ENCODE measurements at regions of chr19 and their contacts with region 1.

Region 1: GRCh38 chr19:46717034-46717723 is at the start of gene PRKD2:
- DNase-seq: peak; percentile 86
- H3K4me3 Mint-ChIP-seq: peak within 1 kb of the TSS; percentile 93
- H3K27ac Mint-ChIP-seq: peak within 1 kb of the TSS; percentile 94
- H3K4me1 Mint-ChIP-seq: peaks cover 42% of the 10 kb centered on the region
- H3K27me3 Mint-ChIP-seq: no peaks in the 10 kb centered on the region
- total RNA-seq, gene PRKD2: 88.6 and 92.9 TPM in 2 replicates

Region 2: DNA sequence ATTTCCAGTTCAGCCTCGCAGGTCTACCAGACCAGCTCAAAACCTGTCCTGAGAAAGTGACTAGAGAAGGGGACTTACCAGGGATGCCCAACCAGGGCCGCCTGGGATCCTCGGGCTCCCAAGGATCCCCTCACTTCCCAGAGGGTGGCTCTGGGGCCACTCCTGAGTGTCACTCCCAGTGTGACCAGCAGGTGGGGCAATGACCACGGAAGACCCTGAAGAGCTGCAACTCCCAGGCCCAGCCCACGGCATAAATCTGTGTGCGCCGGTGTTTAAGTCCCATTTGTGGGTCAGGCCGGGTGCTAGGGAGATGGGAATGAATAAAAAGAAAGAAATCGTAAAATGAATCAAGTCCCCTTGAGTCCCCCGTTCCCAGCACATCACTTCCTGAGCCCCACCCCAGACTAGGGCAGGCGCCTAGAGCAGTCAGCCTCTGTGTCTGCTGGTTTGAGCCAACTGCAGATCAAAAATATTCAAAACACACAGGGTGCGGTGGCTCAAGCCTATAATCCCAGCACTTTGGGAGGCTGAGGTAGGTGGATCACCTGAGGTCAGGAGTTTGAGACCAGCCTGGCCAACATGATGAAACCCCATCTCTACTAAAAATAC is 103.0 kb before region 1 on chr19:
- intact Hi-C with region 1: loop called (anchors 2 kb)
- DNase-seq: peak; percentile 63
- H3K4me3 Mint-ChIP-seq: peak overlapping the region; percentile 64
- H3K27ac Mint-ChIP-seq: peak overlapping the region; percentile 92
- H3K4me1 Mint-ChIP-seq: peaks cover 74% of the 10 kb centered on the region
- H3K27me3 Mint-ChIP-seq: no peaks in the 10 kb centered on the region

Region 3: DNA sequence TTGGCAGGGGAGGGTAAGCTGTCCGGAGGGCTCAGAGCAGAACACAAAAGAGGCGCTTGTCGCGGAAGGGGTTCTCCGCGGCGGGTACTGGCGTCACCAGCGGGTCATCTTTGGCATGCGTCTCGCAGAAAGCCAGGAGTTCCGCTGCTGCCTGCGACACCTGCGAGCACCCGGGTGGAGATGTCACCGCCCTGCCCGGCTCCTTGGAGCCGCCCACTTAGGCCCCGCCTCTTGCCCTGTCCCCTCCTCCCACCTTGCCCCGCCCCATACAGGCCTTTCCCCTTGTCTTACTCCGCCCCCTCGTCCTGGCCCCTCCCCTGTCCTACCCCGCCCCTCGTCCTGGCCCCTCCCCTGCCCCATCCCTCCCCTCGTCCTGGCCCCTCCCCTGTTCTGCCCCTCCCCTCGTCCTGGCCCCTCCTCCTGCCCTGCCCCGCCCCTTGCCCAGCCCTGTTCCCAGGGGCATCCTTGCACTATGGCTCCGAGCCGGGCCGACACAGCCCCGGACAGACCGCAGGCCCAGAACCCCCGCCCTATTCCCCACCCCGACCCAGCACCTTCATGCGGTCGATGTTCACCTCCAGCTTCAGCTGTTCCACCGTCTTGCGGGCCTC is 83.0 kb before region 1 on chr19:
- intact Hi-C with region 1: loop called (anchors 1 kb)
- DNase-seq: peak; percentile 94
- H3K4me3 Mint-ChIP-seq: peak overlapping the region; percentile 85
- H3K27ac Mint-ChIP-seq: peak overlapping the region; percentile 75
- H3K4me1 Mint-ChIP-seq: peaks cover 11% of the 10 kb centered on the region
- H3K27me3 Mint-ChIP-seq: peaks cover 2% of the 10 kb centered on the region

Region 4: DNA sequence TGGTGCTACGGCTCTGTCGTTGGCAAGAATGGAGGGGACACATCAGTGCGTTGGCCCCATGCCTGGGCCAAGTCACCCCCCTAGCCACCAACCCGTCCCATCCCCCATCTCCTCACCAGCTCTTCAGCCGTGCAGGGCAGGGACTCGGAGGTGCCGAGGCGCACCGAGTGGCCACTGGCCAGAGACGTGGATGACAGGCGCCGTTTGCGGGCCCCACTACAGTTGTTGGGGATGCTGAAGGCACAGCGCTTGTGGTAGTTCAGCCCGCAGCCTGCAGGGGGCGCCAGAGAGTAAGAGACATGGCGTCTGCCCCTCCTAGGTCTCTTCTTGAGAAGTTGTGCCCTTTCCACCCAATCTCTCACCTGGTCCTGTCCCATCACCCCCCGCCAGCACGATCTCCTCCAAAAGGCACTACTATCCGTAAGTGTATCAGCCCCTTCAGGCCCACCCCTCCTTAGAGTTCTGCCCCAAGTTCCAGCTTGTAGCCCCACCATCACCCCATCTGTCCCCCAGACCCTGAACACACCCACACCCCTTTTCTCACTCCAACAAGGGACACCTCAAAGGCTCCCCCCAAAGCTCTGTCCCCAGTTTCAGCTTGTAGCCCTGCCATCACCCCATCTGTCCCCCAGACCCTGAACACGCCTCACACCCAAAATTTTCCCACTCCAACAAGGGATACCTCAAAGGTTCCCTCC is 12.7 kb before region 1 on chr19:
- intact Hi-C with region 1: loop called (anchors 1 kb)
- DNase-seq: peak; percentile 71
- H3K4me3 Mint-ChIP-seq: no peak overlapping the region
- H3K27ac Mint-ChIP-seq: peak overlapping the region; percentile 20
- H3K4me1 Mint-ChIP-seq: peaks cover 9% of the 10 kb centered on the region
- H3K27me3 Mint-ChIP-seq: no peaks in the 10 kb centered on the region

Region 5: GRCh38 chr19:46728693-46729676 is 11.8 kb after region 1 on chr19:
- intact Hi-C with region 1: loop called (anchors 1 kb)
- DNase-seq: peak; percentile 74
- H3K4me3 Mint-ChIP-seq: no peak overlapping the region
- H3K27ac Mint-ChIP-seq: no peak overlapping the region
- H3K4me1 Mint-ChIP-seq: peaks cover 28% of the 10 kb centered on the region
- H3K27me3 Mint-ChIP-seq: no peaks in the 10 kb centered on the region

Region 6: GRCh38 chr19:46746281-46747013 is 29.3 kb after region 1 on chr19 and contains the start of gene STRN4:
- intact Hi-C with region 1: loop called (anchors 2 kb)
- DNase-seq: peak; percentile 31
- H3K4me3 Mint-ChIP-seq: peak within 1 kb of the TSS; percentile 95
- H3K27ac Mint-ChIP-seq: peak within 1 kb of the TSS; percentile 91
- H3K4me1 Mint-ChIP-seq: peaks cover 46% of the 10 kb centered on the region
- H3K27me3 Mint-ChIP-seq: no peaks in the 10 kb centered on the region
- total RNA-seq, gene STRN4: 106 and 116 TPM in 2 replicates

Measured in activated T-helper 1 cell treated with anti-CD3 and anti-CD28 coated beads, Interleukin-12 subunit alpha, Interleukin-12 subunit beta, Interleukin-2, Interleukin-4 antibody, amounts not matched to agents 30 ng/mL and 10 ng/mL and 1 ng/mL, durations not matched to agents 14 hours and 24 hours and 36 hours (primary cell).